ENCODE measurements at regions of chr1 and their contacts with region 1.

Region 1: GRCh38 chr1:25239681-25240541 is 7.3 kb downstream of the RSRP1 start:
- DNase-seq: peak; percentile 72 to 91 (median 79)
- ATAC-seq: peak; percentile 92
- H3K4me3 ChIP-seq: peak overlapping the region; percentile 28
- H3K4me3 Mint-ChIP-seq: peak overlapping the region; percentile 87 to 93 (median 91)
- H3K27ac ChIP-seq: peak overlapping the region; percentile 80
- H3K27ac Mint-ChIP-seq: peak overlapping the region; percentile 89 to 98 (median 97)
- H3K4me1 ChIP-seq: peaks cover 33 to 37% of the 10 kb centered on the region in 2 donors
- H3K4me1 Mint-ChIP-seq: peaks cover 23 to 74% (median 63%) of the 10 kb centered on the region in 7 donors
- H3K27me3 ChIP-seq: no peaks in the 10 kb centered on the region
- H3K27me3 Mint-ChIP-seq: no peaks in the 10 kb centered on the region

Region 2: GRCh38 chr1:25223471-25223870 is 16.4 kb before region 1 on chr1:
- CTCF ChIA-PET with region 1: no interaction called
- POLR2A ChIA-PET with region 1: no interaction called
- intact Hi-C with region 1: no loop called
- DNase-seq: no peak
- ATAC-seq: no peak
- H3K4me3 ChIP-seq: no peak overlapping the region
- H3K4me3 Mint-ChIP-seq: no peak overlapping the region
- H3K27ac ChIP-seq: no peak overlapping the region
- H3K27ac Mint-ChIP-seq: no peak overlapping the region
- H3K4me1 ChIP-seq: no peaks in the 10 kb centered on the region
- H3K4me1 Mint-ChIP-seq: peaks cover 0 to 11% (median 5%) of the 10 kb centered on the region in 7 donors
- H3K27me3 ChIP-seq: no peaks in the 10 kb centered on the region
- H3K27me3 Mint-ChIP-seq: no peaks in the 10 kb centered on the region

Region 3: DNA sequence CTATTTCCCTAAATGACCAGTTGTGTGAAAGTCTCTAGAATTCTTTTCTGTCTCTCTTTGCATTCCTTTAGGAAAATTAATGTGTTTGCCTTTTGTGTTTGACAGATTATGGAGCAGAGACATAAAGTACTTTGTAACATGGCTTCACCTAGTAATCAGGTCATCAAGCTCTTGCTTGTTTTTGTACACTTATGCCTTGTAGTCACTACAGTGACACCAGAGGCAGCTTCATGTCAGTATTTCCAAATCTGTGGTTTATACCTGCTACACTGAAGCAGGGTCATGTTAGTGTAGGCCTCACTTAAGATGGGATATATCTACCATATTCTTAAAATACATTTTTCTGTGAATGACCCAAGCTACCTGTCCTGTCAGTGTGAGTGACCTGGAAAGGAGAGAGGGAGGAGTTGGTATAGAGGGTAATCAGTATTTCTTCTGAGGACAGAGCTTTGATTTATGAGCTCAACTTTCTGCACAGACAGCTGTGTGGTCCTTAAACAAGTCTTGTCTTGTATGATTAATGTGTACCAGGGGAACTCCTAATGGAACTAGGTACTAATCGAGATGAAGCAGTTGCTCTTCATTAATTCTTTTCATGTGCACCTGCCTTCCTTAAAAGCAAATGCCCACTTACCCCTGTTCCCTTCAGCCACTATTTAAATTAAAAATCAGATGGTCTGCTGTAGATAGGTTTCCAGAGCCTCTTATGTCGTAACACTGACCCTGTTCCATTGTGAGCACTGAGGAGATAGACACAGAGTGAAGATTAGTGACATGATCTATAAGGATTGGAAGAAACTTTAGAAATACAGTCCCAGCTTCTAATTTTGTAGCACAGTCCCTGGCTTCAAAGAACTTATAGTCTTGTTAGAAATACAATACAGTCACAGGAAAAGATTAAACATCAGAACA is 236.5 kb after region 1 on chr1:
- CTCF ChIA-PET with region 1: no interaction called
- POLR2A ChIA-PET with region 1: no interaction called
- intact Hi-C with region 1: loop called in 1 of 2 experiments (anchors 10 kb)
- DNase-seq: peak in 4 of 9 donors; percentile 23 to 37 (median 28)
- ATAC-seq: no peak
- H3K4me3 ChIP-seq: no peak overlapping the region
- H3K4me3 Mint-ChIP-seq: peak overlapping the region in 7 of 10 donors; percentile 2 to 64 (median 37)
- H3K27ac ChIP-seq: peak overlapping the region; percentile 48
- H3K27ac Mint-ChIP-seq: peak overlapping the region in 8 of 9 donors; percentile 55 to 97 (median 92)
- H3K4me1 ChIP-seq: peaks cover 9 to 42% of the 10 kb centered on the region in 2 donors
- H3K4me1 Mint-ChIP-seq: peaks cover 31 to 67% (median 59%) of the 10 kb centered on the region in 7 donors
- H3K27me3 ChIP-seq: no peaks in the 10 kb centered on the region
- H3K27me3 Mint-ChIP-seq: no peaks in the 10 kb centered on the region

Region 4: GRCh38 chr1:25505656-25506385 is 265.9 kb after region 1 on chr1:
- CTCF ChIA-PET with region 1: no interaction called
- POLR2A ChIA-PET with region 1: no interaction called
- intact Hi-C with region 1: no loop called
- DNase-seq: no peak
- ATAC-seq: no peak
- H3K4me3 ChIP-seq: no peak overlapping the region
- H3K4me3 Mint-ChIP-seq: peak overlapping the region in 9 of 10 donors; percentile 50 to 90 (median 82)
- H3K27ac ChIP-seq: no peak overlapping the region
- H3K27ac Mint-ChIP-seq: peak overlapping the region; percentile 49 to 95 (median 88)
- H3K4me1 ChIP-seq: peaks cover 0 to 20% of the 10 kb centered on the region in 2 donors
- H3K4me1 Mint-ChIP-seq: peaks cover 12 to 39% (median 31%) of the 10 kb centered on the region in 7 donors
- H3K27me3 ChIP-seq: no peaks in the 10 kb centered on the region
- H3K27me3 Mint-ChIP-seq: peaks cover 0 to 6% (median 0%) of the 10 kb centered on the region in 5 donors

Measured in naive thymus-derived CD4-positive, alpha-beta T cell (primary cell).